AG04450 (cell line): ENCODE measurements at regions of chr1 and their contacts with region 1.

Region 1: DNA sequence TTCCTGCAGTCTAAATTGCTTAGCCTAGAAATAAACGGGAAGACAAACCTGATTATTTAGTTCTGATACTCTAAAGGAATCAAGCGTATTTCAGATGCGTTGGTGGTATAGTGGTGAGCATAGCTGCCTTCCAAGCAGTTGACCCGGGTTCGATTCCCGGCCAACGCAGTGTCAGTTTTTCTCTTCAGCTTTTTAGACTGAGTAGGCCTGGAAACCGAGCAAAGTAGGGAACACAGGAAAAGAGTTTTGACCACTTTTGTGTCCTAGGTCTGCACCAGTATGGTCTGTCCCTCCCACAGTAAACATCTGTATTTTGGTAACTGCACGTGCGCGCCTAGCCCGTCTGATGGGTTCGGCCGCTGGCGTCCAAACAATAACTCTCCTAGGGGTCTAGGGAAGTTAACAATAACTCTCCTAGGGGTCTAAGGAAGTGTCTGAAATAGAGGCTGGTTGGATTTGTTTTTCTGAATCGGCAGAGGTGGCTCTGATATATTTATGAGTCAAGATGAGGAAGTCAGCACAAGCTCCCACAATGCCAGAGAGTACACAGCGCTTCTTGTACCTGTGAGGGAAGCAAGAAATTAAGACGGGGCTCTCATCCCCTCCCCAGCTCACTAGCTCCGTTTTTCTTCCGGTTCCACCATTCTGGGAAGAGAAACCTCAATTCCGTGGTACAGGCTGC is 15.6 kb upstream of the HJV start:
- DNase-seq: peak; percentile 78
- H3K4me3 ChIP-seq: peak overlapping the region; percentile 85
- H3K27ac ChIP-seq: peak overlapping the region; percentile 83
- H3K27me3 ChIP-seq: no peaks in the 10 kb centered on the region
- CTCF ChIP-seq: no peak

Region 2: GRCh38 chr1:145740266-145740665 is 296.8 kb before region 1 on chr1:
- CTCF ChIA-PET with region 1: no interaction called
- POLR2A ChIA-PET with region 1: no interaction called
- DNase-seq: peak; percentile 78
- H3K4me3 ChIP-seq: no peak overlapping the region
- H3K27ac ChIP-seq: no peak overlapping the region
- H3K27me3 ChIP-seq: no peaks in the 10 kb centered on the region
- CTCF ChIP-seq: no peak

Region 3: GRCh38 chr1:145898756-145899155 is 138.3 kb before region 1 on chr1:
- CTCF ChIA-PET with region 1: no interaction called
- POLR2A ChIA-PET with region 1: no interaction called
- DNase-seq: no peak
- H3K4me3 ChIP-seq: no peak overlapping the region
- H3K27ac ChIP-seq: no peak overlapping the region
- H3K27me3 ChIP-seq: no peaks in the 10 kb centered on the region
- CTCF ChIP-seq: no peak

Region 4: GRCh38 chr1:145937436-145937835 is 99.7 kb before region 1 on chr1:
- CTCF ChIA-PET with region 1: no interaction called
- POLR2A ChIA-PET with region 1: no interaction called
- DNase-seq: no peak
- H3K4me3 ChIP-seq: no peak overlapping the region
- H3K27ac ChIP-seq: no peak overlapping the region
- H3K27me3 ChIP-seq: no peaks in the 10 kb centered on the region
- CTCF ChIP-seq: no peak

Region 5: DNA sequence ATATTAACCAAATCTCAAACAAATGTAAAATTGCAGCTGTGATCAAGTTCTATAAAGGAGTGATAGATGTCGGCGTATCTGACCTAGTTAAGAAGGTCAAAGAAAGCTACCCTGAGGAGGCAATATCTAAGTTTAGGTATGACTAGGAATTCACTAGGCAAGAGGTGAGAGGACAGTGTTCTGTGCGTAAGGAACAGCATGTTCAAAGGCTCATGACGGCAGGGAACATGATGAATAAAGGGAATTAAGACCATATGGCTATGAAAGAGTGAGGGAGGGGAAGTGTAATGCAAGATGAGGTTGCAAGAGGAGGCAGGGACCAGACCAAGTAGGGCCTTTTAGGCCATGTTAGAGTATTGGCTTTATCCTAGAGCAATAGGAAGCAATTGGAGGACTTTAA is 87.9 kb before region 1 on chr1:
- CTCF ChIA-PET with region 1: interaction called, 6 read pairs
- POLR2A ChIA-PET with region 1: interaction called, 12 read pairs
- DNase-seq: no peak
- H3K4me3 ChIP-seq: no peak overlapping the region
- H3K27ac ChIP-seq: no peak overlapping the region
- H3K27me3 ChIP-seq: no peaks in the 10 kb centered on the region
- CTCF ChIP-seq: no peak